CD4-positive, alpha-beta T cell (primary cell): ENCODE measurements at regions of chr18 and their contacts with region 1.

Region 1: GRCh38 chr18:36073686-36074085 is 6.3 kb upstream of the RPRD1A start:
- DNase-seq: no peak
- ATAC-seq: no peak
- H3K4me3 ChIP-seq: no peak overlapping the region
- H3K4me3 Mint-ChIP-seq: no peak overlapping the region
- H3K27ac ChIP-seq: no peak overlapping the region
- H3K27ac Mint-ChIP-seq: no peak overlapping the region
- H3K4me1 ChIP-seq: no peaks in the 10 kb centered on the region
- H3K4me1 Mint-ChIP-seq: no peaks in the 10 kb centered on the region
- H3K27me3 ChIP-seq: peaks cover 0 to 3% of the 10 kb centered on the region in 2 experiments
- H3K27me3 Mint-ChIP-seq: peaks cover 25% of the 10 kb centered on the region
- CTCF ChIP-seq: no peak

Region 2: DNA sequence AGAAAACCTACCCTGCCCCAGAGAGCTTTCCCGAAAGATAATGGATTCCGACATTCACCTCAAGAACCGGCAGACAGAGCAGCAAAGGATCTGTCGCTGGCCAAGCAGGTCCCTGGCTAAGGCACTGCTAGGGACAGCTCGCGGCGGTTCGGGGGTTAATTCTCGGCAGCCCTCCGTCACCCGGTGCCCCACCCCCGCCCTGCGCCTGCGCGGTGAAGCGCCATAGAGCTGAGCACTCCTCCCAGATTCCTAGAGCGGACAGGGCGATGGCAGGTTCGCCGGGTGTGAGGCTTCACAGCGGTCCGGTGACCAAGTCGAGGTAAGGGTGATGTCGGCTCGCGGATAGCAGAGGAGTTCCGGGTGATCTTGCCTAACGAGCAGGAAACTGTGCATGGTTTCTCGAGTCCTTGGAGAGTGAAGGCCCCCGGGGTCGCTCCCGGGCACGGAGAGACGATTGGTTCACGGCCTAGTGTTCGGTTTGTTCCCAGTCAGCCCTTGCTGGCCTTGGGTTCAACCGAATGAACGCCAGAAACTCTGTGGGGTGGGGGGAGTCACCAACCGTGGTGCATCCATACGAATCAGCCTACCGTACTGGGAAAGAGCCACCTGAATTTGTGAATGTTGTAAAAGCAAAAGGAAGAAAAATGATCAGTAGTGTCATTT is 783.5 kb before region 1 on chr18 and contains the start of gene ZSCAN30:
- CTCF ChIA-PET with region 1: no interaction called
- POLR2A ChIA-PET with region 1: no interaction called
- intact Hi-C with region 1: loop called in 1 of 2 experiments (anchors 5 kb)
- DNase-seq: peak; percentile 93 to 98 (median 96)
- ATAC-seq: peak; percentile 90
- H3K4me3 ChIP-seq: peak within 1 kb of the TSS; percentile 92
- H3K4me3 Mint-ChIP-seq: peak within 1 kb of the TSS; percentile 99
- H3K27ac ChIP-seq: peak within 1 kb of the TSS; percentile 55 to 87
- H3K27ac Mint-ChIP-seq: peak within 1 kb of the TSS; percentile 96
- H3K4me1 ChIP-seq: peaks cover 31% of the 10 kb centered on the region
- H3K4me1 Mint-ChIP-seq: peaks cover 78% of the 10 kb centered on the region
- H3K27me3 ChIP-seq: no peaks in the 10 kb centered on the region
- H3K27me3 Mint-ChIP-seq: no peaks in the 10 kb centered on the region
- CTCF ChIP-seq: no peak
- total RNA-seq, gene ZSCAN30: 9.6 to 11.6 TPM